Activated CD4-positive, alpha-beta T cell treated with anti-CD3 and anti-CD28 coated beads, Interleukin-2, amount 10 ng/mL, durations not matched to agents 24 days and 14 days (primary cell): ENCODE measurements at regions of chr11 and their contacts with region 1.

Region 1: DNA sequence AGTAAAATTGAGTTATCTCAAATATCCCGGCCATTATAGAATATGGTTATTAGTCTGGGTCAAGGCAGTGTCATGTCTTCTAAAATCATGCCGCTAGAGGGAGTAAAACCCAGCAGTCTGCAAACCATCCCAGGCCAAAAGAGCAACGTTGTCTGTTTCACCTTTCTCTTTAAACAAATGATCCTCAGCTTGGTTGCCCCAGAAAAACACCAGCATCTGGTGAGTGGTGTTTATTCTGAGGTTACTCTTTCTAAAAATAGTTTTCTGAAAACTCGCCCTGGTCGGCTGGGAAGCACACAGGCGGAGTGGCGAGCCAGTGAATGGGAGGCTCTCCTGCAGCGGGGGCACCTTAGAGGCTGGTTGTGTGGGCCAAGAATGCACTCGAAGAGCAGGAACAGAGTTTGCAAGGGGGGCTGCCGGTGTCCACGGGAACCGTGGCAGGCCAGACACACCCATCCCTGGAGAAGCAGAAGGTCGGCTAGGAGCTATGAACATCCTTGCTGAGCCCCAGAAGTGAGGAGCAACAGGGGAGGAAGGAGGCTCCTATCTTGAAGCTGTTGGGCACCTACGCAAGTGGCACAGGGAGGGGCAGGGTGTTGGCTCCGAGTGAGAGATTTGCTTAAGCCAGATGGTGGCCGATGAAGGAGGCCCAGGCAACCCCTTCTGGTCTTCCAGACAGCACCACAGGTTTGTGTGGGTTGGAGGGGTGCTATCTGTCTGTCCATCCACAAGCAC is 297.1 kb downstream of the ETS1 start:
- DNase-seq: peak; percentile 94
- H3K4me3 Mint-ChIP-seq: peak overlapping the region; percentile 93
- H3K27ac Mint-ChIP-seq: peak overlapping the region; percentile 99
- H3K4me1 Mint-ChIP-seq: peaks cover 90% of the 10 kb centered on the region
- H3K27me3 Mint-ChIP-seq: no peaks in the 10 kb centered on the region

Region 2: GRCh38 chr11:128182844-128183243 is 107.4 kb before region 1 on chr11:
- intact Hi-C with region 1: loop called (anchors 1 kb)
- DNase-seq: no peak
- H3K4me3 Mint-ChIP-seq: no peak overlapping the region
- H3K27ac Mint-ChIP-seq: peak overlapping the region; percentile 73
- H3K4me1 Mint-ChIP-seq: peaks cover 30% of the 10 kb centered on the region
- H3K27me3 Mint-ChIP-seq: no peaks in the 10 kb centered on the region

Region 3: DNA sequence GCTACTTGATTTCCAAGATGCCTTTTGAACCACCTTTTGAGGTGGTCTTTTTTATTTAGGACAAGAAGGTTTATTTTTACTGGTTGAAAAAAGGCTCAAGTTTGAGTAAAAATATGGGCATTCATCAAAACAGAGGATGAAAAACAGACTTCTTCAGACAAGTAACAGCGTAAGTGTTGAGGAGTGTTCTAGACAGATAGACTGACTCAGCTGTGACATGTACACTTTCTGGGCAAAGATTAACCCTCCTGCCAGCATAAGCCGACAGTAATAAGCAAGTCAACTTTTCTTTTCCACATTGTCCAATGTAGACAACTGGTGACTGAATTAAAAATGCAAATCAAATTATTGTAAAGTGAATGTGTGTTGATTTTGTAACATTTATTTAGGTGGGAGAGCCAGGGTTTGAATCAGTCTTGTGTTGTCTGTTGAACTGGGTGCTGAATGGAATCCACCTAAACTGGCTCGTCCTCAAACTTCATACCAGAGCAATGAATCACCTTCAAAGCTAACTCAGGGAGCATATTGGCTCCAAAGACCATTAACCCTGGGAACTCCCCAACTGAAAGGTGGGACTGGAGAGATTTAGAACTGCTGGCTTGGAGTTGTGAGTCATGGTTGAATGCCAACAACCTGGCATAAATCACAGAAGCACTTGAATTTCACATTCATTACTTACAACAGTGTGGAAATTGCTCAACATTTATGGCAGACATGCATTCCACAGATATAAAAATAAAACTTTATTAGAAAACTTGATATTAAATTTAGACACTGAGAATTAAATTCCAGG is 79.9 kb before region 1 on chr11:
- intact Hi-C with region 1: no loop called
- DNase-seq: no peak
- H3K4me3 Mint-ChIP-seq: no peak overlapping the region
- H3K27ac Mint-ChIP-seq: no peak overlapping the region
- H3K4me1 Mint-ChIP-seq: peaks cover 5% of the 10 kb centered on the region
- H3K27me3 Mint-ChIP-seq: no peaks in the 10 kb centered on the region

Region 4: DNA sequence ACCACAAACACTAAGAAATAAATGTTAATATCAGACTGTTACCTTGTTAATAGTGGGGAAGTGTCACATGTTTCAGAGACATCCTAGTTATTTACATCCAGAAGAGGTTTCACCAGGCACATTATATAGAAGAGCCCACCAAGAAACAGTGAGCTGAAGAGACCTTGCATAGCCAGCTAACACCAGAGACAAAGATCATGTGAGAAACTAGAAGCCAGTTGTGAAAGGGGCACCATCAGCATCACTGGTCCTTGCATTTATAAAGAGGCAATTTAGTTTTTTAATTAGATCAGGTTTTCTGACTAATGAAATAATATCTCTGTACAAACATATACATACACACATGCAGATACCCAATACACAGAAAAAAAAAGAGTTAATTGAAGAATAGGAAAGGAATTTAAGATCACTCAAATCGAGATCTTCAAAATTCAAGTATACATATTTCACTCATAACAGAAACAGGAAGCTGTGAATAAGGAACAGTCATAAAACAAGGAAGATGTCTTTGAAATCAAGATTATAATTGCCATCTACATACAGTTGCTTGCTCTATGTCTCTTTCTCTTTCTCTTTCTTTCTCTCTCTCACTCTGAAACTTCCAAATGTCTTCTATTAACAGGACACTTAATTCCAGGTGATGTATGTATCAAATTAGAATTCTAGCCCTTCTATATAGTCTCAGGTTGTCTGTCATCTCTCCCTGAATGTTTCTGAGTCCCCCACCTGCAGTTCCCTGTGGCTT is 51.6 kb before region 1 on chr11:
- intact Hi-C with region 1: loop called (anchors 1 kb)
- DNase-seq: no peak
- H3K4me3 Mint-ChIP-seq: peak overlapping the region; percentile 45
- H3K27ac Mint-ChIP-seq: peak overlapping the region; percentile 63
- H3K4me1 Mint-ChIP-seq: peaks cover 24% of the 10 kb centered on the region
- H3K27me3 Mint-ChIP-seq: peaks cover 2% of the 10 kb centered on the region

Region 5: DNA sequence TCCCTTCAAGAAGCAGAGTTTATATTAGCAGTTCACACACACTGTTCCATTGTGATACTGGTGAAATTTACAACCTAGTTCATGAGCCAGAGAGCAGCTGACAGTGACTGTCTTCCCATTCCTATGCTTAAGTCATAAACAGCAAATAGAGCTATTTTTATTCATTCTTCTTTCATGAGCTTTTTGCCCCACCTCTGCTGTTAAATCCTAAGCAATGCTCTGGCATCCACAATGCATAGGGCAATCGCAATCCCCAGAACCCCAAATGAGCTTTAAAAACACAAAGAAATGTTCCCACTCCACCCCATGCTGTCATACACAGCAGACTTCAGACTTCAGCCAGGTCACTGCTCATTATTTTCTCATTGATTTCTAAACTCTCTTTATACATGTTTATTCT is 10.4 kb before region 1 on chr11:
- intact Hi-C with region 1: no loop called
- DNase-seq: no peak
- H3K4me3 Mint-ChIP-seq: no peak overlapping the region
- H3K27ac Mint-ChIP-seq: no peak overlapping the region
- H3K4me1 Mint-ChIP-seq: peaks cover 4% of the 10 kb centered on the region
- H3K27me3 Mint-ChIP-seq: peaks cover 19% of the 10 kb centered on the region

Region 6: DNA sequence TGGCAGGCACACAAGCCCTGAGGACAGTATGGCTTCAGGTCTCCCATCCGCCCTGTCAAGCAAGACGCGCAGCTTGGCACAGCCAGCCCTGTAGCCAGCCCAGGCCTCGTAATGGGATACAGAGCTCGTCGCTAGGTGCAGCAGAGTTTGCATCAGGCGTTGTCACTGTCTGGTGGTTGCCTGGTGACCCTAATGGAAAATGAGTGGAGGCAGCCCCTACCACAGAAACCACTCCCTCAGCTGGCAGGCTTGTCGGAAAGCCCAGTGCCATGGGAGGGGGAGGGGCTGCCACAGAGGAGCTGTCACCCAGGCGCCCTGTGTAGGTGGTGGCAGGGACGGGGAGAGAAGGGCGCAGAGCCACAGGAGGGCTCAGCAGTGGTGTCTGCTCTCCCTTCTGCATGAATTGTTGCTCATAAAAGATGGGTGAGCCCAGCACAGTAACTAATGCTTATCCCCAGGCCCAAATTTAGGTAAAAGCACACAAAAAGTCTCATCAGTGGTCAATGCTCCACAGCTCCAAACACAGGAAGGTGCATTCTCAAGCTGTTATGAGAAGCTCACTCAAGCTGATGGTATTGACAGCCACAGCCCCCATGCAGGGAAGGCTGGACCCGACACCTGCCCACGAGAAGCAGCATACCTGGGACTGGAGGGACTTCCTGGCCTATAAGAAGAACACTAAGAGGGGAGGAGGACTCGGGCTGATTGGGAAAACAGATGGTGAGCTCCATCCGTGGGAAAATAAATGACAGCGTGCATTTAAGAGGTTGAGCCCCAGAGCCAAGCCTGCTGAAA is 132.5 kb after region 1 on chr11:
- intact Hi-C with region 1: loop called (anchors 1 kb)
- DNase-seq: peak; percentile 89
- H3K4me3 Mint-ChIP-seq: peak overlapping the region; percentile 65
- H3K27ac Mint-ChIP-seq: peak overlapping the region; percentile 96
- H3K4me1 Mint-ChIP-seq: peaks cover 24% of the 10 kb centered on the region
- H3K27me3 Mint-ChIP-seq: no peaks in the 10 kb centered on the region

Region 7: GRCh38 chr11:128522055-128522942 is 232.0 kb after region 1 on chr11:
- intact Hi-C with region 1: loop called (anchors 1 kb)
- DNase-seq: peak; percentile 97
- H3K4me3 Mint-ChIP-seq: peak overlapping the region; percentile 93
- H3K27ac Mint-ChIP-seq: peak overlapping the region; percentile 99
- H3K4me1 Mint-ChIP-seq: peaks cover 54% of the 10 kb centered on the region
- H3K27me3 Mint-ChIP-seq: no peaks in the 10 kb centered on the region

Region 8: GRCh38 chr11:128757235-128757711 is 467.0 kb after region 1 on chr11:
- intact Hi-C with region 1: loop called (anchors 1 kb)
- DNase-seq: peak; percentile 89
- H3K4me3 Mint-ChIP-seq: peak overlapping the region; percentile 37
- H3K27ac Mint-ChIP-seq: peak overlapping the region; percentile 90
- H3K4me1 Mint-ChIP-seq: peaks cover 59% of the 10 kb centered on the region
- H3K27me3 Mint-ChIP-seq: no peaks in the 10 kb centered on the region